ENCODE measurements at regions of chr10 and their contacts with region 1.

Region 1: DNA sequence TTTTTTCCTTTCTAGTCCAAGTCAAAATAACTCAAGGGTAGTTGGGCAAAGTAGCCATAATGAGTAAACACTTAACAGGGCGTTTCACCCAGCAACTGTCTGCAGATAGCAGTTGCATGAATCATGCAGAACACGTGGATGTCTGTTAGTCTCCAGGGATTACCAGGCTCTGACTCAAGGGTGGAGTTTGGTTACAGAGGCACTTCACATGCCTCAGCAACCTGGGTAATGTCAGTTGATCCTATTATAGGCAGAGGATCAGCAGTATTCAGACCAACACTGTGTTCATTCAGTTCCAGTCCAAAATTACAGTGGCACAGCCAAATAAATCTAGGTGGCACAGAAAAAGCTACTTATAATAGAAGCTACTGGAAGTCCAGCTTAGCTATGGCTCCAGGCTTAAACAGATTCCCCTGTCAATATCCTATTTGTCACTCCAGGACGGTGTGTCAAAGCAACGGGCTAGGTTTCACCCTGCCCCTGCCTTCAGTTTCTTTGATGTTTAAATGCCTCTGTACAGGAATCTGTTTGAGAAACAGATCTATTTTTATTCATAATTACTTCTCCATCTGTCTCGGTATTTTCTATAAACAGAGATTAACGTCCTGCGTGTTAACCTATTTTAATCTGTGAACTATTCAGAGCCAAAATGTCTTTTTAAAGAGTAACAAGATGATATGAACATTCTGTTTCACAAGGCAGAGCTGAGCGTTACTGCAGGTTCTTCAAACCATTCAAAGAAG is 162.7 kb upstream of the AKR1E2 start:
- DNase-seq: peak; percentile 99
- H3K4me3 ChIP-seq: no peak overlapping the region
- H3K27ac ChIP-seq: peak overlapping the region; percentile 100
- H3K4me1 ChIP-seq: peaks cover 28% of the 10 kb centered on the region
- H3K27me3 ChIP-seq: no peaks in the 10 kb centered on the region
- CTCF ChIP-seq: no peak

Region 2: DNA sequence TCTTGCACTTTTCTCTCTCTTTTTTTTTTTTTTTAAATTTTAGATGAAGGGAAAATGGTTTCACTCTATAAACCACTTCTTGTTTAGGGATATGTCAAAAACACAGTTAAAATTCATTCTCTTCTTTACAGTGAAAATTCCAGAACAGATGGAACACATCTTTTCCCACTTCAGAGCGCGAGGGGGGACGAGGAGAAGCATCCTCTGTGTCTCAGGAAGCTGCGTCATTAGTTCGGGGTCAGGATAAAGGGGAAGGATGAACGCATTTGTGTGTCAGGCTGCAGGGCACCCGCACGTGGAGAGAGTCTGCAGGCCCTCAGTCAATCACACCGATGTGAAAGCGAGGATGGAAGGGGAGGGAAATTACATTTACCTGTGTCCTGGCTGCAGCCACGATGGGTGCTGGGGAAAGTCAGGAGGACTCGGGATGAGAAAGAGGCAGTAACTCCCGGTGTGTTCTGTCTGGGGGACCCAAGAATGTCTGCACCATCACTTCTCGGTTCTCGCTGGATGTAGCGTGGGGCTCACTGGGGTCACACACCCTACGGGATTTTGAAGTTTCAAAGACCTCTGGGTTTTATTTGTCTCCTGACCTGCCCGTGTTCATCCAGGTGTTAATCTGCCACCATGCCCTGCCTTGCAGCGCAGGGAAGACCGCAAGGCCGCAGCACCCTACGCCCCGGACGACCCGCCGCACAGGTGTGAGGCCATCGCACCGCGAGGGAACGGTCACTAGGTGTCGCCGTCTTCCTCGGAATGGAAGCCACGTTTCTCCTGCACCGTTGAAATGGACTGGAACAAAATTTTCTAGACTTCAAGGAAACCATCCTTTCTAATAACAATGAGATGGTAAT is 1424.0 kb before region 1 on chr10:
- CTCF ChIA-PET with region 1: no interaction called
- dilution Hi-C with region 1: no loop called
- in situ Hi-C with region 1: loop called in 1 of 2 experiments (anchors 25 kb)
- intact Hi-C with region 1: no loop called
- DNase-seq: peak; percentile 26
- H3K4me3 ChIP-seq: no peak overlapping the region
- H3K27ac ChIP-seq: no peak overlapping the region
- H3K4me1 ChIP-seq: no peaks in the 10 kb centered on the region
- H3K27me3 ChIP-seq: no peaks in the 10 kb centered on the region
- CTCF ChIP-seq: peak; percentile 73 to 83

Region 3: DNA sequence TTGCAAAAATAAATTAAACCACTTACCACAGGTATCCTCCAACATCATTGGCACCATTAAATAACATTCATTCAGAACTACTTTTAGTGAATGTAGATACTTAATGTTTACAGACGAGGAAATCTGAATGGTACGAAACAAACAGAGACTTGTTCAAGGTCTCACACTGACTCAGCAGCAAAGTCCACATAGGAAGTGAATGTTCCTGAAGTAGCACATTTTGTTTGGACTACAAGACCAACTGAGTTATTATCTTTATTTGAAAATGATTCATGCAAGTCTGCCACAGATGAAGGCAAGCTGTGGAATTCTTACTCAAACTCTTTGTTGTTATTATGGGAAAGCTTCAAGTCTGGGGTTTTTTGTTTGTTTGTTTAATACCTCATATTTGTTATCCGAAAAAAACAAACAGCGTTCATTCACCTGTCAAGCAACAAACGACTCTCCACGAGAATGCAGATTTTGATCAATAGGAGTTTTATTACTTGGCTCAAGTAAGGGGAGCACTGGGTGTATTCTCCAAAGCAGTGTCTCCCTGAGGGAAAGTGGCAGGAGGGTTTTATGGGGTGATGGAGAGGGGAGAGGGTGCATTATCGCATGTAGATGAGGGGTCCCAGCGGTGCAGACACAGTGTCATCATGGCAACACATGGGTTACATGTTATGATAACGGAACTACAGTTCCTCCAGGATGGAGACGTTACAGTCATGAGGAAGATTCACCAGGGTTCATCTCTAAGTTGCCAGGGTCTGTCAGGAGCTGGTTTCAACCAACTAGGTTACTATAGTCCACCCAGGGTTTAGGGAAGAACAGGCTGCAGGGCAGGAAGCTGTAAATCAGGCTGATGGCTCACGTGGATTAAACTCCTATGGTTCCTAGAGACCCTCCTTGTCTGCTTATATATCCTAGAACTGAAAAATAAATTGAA is 15.0 kb after region 1 on chr10:
- CTCF ChIA-PET with region 1: no interaction called
- dilution Hi-C with region 1: no loop called
- in situ Hi-C with region 1: no loop called
- intact Hi-C with region 1: loop called (anchors 1 kb)
- DNase-seq: peak; percentile 94
- H3K4me3 ChIP-seq: peak overlapping the region in 2 of 3 experiments; percentile 46 to 61
- H3K27ac ChIP-seq: peak overlapping the region; percentile 100
- H3K4me1 ChIP-seq: peaks cover 43% of the 10 kb centered on the region
- H3K27me3 ChIP-seq: no peaks in the 10 kb centered on the region
- CTCF ChIP-seq: no peak

Region 4: DNA sequence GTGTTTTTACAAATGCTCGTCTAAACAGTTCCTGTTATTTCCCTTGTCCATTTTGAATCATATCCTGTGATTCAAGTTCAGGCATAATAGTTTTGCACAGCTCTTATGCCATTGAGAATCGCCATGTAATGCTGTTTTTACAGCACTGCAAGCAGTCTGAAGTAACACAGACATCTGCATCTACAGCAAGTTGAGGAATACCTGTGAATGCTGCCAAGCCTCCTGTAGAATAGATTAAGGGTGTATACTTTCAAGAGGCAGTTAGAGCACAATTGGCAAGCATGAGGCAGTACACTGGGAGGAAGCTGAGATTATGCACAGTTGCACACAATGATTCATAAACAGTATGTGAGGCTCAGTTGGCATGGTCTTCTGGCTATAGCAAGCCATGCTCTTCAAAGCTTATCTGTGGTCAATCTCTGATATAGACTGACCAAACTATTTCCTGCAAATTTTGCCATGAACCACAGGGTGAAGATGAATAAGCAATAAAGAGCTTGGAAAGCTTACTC is 40.8 kb after region 1 on chr10:
- CTCF ChIA-PET with region 1: no interaction called
- dilution Hi-C with region 1: no loop called
- in situ Hi-C with region 1: no loop called
- intact Hi-C with region 1: loop called (anchors 2 kb)
- DNase-seq: peak; percentile 99
- H3K4me3 ChIP-seq: no peak overlapping the region
- H3K27ac ChIP-seq: peak overlapping the region; percentile 97
- H3K4me1 ChIP-seq: peaks cover 17% of the 10 kb centered on the region
- H3K27me3 ChIP-seq: no peaks in the 10 kb centered on the region
- CTCF ChIP-seq: no peak